Activated CD8-positive, alpha-beta T cell treated with anti-CD3 and anti-CD28 coated beads for 36 hours (primary cell): ENCODE measurements at regions of chr1 and their contacts with region 1.

Region 1: DNA sequence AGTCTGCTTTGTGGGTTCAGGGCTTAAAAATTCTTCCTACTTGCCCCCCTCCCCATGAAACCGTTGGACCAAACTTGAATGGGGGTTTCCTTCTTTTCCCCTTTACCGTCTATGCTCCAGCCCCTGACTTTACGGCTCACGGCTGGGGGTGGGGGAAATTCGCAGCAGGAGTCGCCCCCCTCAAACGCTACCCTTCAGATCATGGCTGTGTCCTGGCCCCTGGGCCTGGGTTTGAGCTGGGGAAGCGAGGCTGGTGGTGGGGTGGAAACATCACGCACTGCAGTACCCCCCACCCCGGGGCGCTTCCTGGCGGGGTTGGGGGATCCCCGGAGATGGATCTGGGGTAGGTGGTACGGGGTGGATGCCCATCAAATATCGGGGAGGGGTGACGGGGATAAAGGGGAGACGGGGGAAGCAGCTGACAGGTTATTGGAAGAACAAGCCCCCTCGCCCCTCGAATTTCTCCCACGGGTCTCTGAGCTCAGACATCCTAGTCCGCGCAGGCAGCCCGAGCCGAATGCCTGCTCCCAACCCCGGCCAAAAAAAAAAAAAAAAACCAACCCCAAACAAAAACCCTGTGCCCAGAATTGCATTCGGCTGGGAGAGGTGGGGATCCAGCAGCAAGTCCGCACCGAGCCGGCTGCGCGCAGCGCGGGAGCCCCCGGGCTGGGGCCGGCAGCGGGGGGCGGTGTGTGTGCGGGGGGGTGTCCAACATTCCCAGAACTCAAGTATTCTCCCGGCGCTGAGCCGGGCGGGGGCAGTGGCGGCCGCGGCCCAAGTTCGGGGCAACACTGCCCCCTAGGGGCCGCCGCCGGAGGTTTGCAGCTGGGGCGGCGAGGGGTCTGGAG is 59.0 kb upstream of the ACOT11 start:
- DNase-seq: peak; percentile 66
- ATAC-seq: peak; percentile 62
- H3K4me3 Mint-ChIP-seq: peak overlapping the region; percentile 73
- H3K27ac Mint-ChIP-seq: peak overlapping the region; percentile 55
- H3K4me1 Mint-ChIP-seq: peaks cover 26% of the 10 kb centered on the region
- H3K27me3 Mint-ChIP-seq: peaks cover 9% of the 10 kb centered on the region
- CTCF ChIP-seq: peak; percentile 99

Region 2: GRCh38 chr1:54199765-54200518 is 289.1 kb before region 1 on chr1 and contains the starts of genes CYB5RL and MRPL37:
- CTCF ChIA-PET with region 1: interaction called, 20 read pairs
- POLR2A ChIA-PET with region 1: interaction called, 6 read pairs
- intact Hi-C with region 1: loop called (anchors 5 kb)
- DNase-seq: peak; percentile 96
- ATAC-seq: peak; percentile 98
- H3K4me3 Mint-ChIP-seq: peak within 1 kb of the TSS; percentile 94
- H3K27ac Mint-ChIP-seq: peak within 1 kb of the TSS; percentile 84
- H3K4me1 Mint-ChIP-seq: peaks cover 28% of the 10 kb centered on the region
- H3K27me3 Mint-ChIP-seq: no peaks in the 10 kb centered on the region
- CTCF ChIP-seq: no peak
- total RNA-seq, gene CYB5RL: 11.4 to 12.6 TPM
- total RNA-seq, gene MRPL37: 194 to 198 TPM

Region 3: GRCh38 chr1:54287176-54287650 is 201.8 kb before region 1 on chr1:
- CTCF ChIA-PET with region 1: interaction called, 16 read pairs
- POLR2A ChIA-PET with region 1: interaction called, 3 read pairs
- intact Hi-C with region 1: loop called (anchors 10 kb)
- DNase-seq: peak; percentile 95
- ATAC-seq: peak; percentile 82
- H3K4me3 Mint-ChIP-seq: peak overlapping the region; percentile 74
- H3K27ac Mint-ChIP-seq: peak overlapping the region; percentile 98
- H3K4me1 Mint-ChIP-seq: peaks cover 92% of the 10 kb centered on the region
- H3K27me3 Mint-ChIP-seq: no peaks in the 10 kb centered on the region
- CTCF ChIP-seq: no peak

Region 4: GRCh38 chr1:54406339-54407153 is 82.5 kb before region 1 on chr1 and contains the start of gene SSBP3:
- CTCF ChIA-PET with region 1: interaction called, 81 read pairs
- POLR2A ChIA-PET with region 1: interaction called, 6 read pairs
- intact Hi-C with region 1: loop called (anchors 1 kb)
- DNase-seq: peak; percentile 93
- ATAC-seq: peak; percentile 85
- H3K4me3 Mint-ChIP-seq: peak within 1 kb of the TSS; percentile 84
- H3K27ac Mint-ChIP-seq: peak within 1 kb of the TSS; percentile 90
- H3K4me1 Mint-ChIP-seq: peaks cover 59% of the 10 kb centered on the region
- H3K27me3 Mint-ChIP-seq: no peaks in the 10 kb centered on the region
- CTCF ChIP-seq: no peak
- total RNA-seq, gene SSBP3: 62.6 to 67.8 TPM

Region 5: GRCh38 chr1:54499360-54500106 is 10.5 kb after region 1 on chr1:
- CTCF ChIA-PET with region 1: interaction called, 26 read pairs
- POLR2A ChIA-PET with region 1: no interaction called
- intact Hi-C with region 1: no loop called
- DNase-seq: peak; percentile 58
- ATAC-seq: peak; percentile 81
- H3K4me3 Mint-ChIP-seq: peak overlapping the region; percentile 63
- H3K27ac Mint-ChIP-seq: no peak overlapping the region
- H3K4me1 Mint-ChIP-seq: peaks cover 7% of the 10 kb centered on the region
- H3K27me3 Mint-ChIP-seq: peaks cover 19% of the 10 kb centered on the region
- CTCF ChIP-seq: no peak